Naive thymus-derived CD4-positive, alpha-beta T cell (primary cell): ENCODE measurements at regions of chr17 and their contacts with region 1.

Region 1: GRCh38 chr17:49763735-49764558 is at the start of gene FAM117A:
- DNase-seq: peak; percentile 72 to 99 (median 98)
- ATAC-seq: peak; percentile 93
- H3K4me3 ChIP-seq: peak within 1 kb of the TSS; percentile 82
- H3K4me3 Mint-ChIP-seq: peak within 1 kb of the TSS; percentile 92 to 99 (median 96)
- H3K27ac ChIP-seq: peak within 1 kb of the TSS; percentile 65
- H3K27ac Mint-ChIP-seq: peak within 1 kb of the TSS; percentile 62 to 96 (median 93)
- H3K4me1 ChIP-seq: peaks cover 32 to 36% of the 10 kb centered on the region in 2 donors
- H3K4me1 Mint-ChIP-seq: peaks cover 35 to 52% (median 51%) of the 10 kb centered on the region in 7 donors
- H3K27me3 ChIP-seq: no peaks in the 10 kb centered on the region
- H3K27me3 Mint-ChIP-seq: peaks cover 0 to 35% (median 0%) of the 10 kb centered on the region in 5 donors
- total RNA-seq, gene FAM117A: 31.8 to 99.1 (median 58.5) TPM

Region 2: GRCh38 chr17:49588726-49589576 is 175.0 kb before region 1 on chr17:
- CTCF ChIA-PET with region 1: no interaction called
- POLR2A ChIA-PET with region 1: no interaction called
- intact Hi-C with region 1: no loop called
- DNase-seq: no peak
- ATAC-seq: no peak
- H3K4me3 ChIP-seq: no peak overlapping the region
- H3K4me3 Mint-ChIP-seq: no peak overlapping the region
- H3K27ac ChIP-seq: no peak overlapping the region
- H3K27ac Mint-ChIP-seq: peak overlapping the region in 3 of 9 donors; percentile 52 to 81 (median 53)
- H3K4me1 ChIP-seq: no peaks in the 10 kb centered on the region
- H3K4me1 Mint-ChIP-seq: peaks cover 0 to 10% (median 0%) of the 10 kb centered on the region in 7 donors
- H3K27me3 ChIP-seq: no peaks in the 10 kb centered on the region
- H3K27me3 Mint-ChIP-seq: no peaks in the 10 kb centered on the region

Region 3: GRCh38 chr17:49739641-49740271 is 24.2 kb before region 1 on chr17:
- CTCF ChIA-PET with region 1: interaction called, 16 read pairs
- POLR2A ChIA-PET with region 1: interaction called, 318 read pairs
- intact Hi-C with region 1: loop called (anchors 1 kb)
- DNase-seq: peak; percentile 69 to 99 (median 98)
- ATAC-seq: peak; percentile 99
- H3K4me3 ChIP-seq: peak overlapping the region; percentile 67
- H3K4me3 Mint-ChIP-seq: peak overlapping the region; percentile 80 to 95 (median 90)
- H3K27ac ChIP-seq: peak overlapping the region; percentile 96
- H3K27ac Mint-ChIP-seq: peak overlapping the region; percentile 97 to 100 (median 99)
- H3K4me1 ChIP-seq: peaks cover 77 to 83% of the 10 kb centered on the region in 2 donors
- H3K4me1 Mint-ChIP-seq: peaks cover 62 to 97% (median 79%) of the 10 kb centered on the region in 7 donors
- H3K27me3 ChIP-seq: no peaks in the 10 kb centered on the region
- H3K27me3 Mint-ChIP-seq: no peaks in the 10 kb centered on the region

Region 4: DNA sequence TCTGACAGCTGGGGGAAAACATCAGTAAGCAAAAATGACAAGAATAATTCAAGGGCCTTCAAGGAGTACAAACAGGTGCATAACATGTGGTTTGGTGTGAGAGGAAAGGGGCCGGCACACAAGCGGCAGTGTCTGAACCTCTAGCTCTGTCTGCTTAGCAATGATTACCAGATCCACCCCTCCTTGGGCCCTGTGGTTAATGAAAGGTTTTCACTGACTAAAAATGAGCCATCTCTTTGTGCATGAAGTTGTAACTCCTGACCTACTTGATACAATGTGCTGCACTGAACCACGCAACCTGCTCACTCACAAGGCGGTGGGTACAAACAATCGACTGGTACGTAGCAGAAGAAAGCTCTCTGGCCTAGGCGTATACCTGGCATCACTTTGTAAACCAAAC is 15.2 kb before region 1 on chr17:
- CTCF ChIA-PET with region 1: interaction called, 16 read pairs
- POLR2A ChIA-PET with region 1: interaction called, 318 read pairs
- intact Hi-C with region 1: loop called (anchors 1 kb)
- DNase-seq: peak in 6 of 9 donors; percentile 43 to 61 (median 48)
- ATAC-seq: peak; percentile 79
- H3K4me3 ChIP-seq: no peak overlapping the region
- H3K4me3 Mint-ChIP-seq: peak overlapping the region; percentile 60 to 87 (median 76)
- H3K27ac ChIP-seq: peak overlapping the region; percentile 84
- H3K27ac Mint-ChIP-seq: peak overlapping the region; percentile 88 to 98 (median 97)
- H3K4me1 ChIP-seq: peaks cover 70 to 76% of the 10 kb centered on the region in 2 donors
- H3K4me1 Mint-ChIP-seq: peaks cover 49 to 92% (median 76%) of the 10 kb centered on the region in 7 donors
- H3K27me3 ChIP-seq: no peaks in the 10 kb centered on the region
- H3K27me3 Mint-ChIP-seq: no peaks in the 10 kb centered on the region

Region 5: DNA sequence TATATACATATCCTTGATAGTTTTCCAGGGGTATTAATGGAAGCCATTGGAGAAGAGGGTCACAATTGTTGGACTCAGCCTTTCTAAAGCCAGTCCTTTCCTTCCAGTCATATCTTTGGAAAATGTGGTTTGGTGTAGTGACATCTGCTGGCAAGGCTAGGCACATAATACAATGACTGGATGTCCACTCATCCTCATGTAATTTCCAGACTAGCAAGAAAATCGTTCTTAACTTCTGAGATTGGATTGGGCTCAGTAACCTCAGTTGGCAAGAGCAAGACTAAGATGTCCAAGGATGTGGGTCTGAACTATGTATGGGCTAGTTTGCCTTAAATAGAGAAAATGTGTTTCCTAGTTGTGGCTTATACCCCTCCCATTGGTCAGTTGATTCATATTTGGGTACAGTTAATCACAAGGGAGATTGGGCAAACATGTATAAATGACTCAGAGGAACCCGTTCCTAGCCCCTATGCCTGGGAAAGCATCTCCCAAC is 15.8 kb after region 1 on chr17:
- CTCF ChIA-PET with region 1: interaction called, 4 read pairs
- POLR2A ChIA-PET with region 1: interaction called, 70 read pairs
- intact Hi-C with region 1: loop called in 1 of 2 experiments (anchors 2 kb)
- DNase-seq: peak in 4 of 9 donors; percentile 14 to 33 (median 24)
- ATAC-seq: peak; percentile 62
- H3K4me3 ChIP-seq: no peak overlapping the region
- H3K4me3 Mint-ChIP-seq: no peak overlapping the region
- H3K27ac ChIP-seq: no peak overlapping the region
- H3K27ac Mint-ChIP-seq: no peak overlapping the region
- H3K4me1 ChIP-seq: no peaks in the 10 kb centered on the region
- H3K4me1 Mint-ChIP-seq: peaks cover 0 to 11% (median 5%) of the 10 kb centered on the region in 7 donors
- H3K27me3 ChIP-seq: no peaks in the 10 kb centered on the region
- H3K27me3 Mint-ChIP-seq: peaks cover 0 to 7% (median 0%) of the 10 kb centered on the region in 5 donors

Region 6: GRCh38 chr17:50001140-50001714 is 237.3 kb after region 1 on chr17:
- CTCF ChIA-PET with region 1: no interaction called
- POLR2A ChIA-PET with region 1: no interaction called
- intact Hi-C with region 1: no loop called
- DNase-seq: no peak
- ATAC-seq: no peak
- H3K4me3 ChIP-seq: no peak overlapping the region
- H3K4me3 Mint-ChIP-seq: no peak overlapping the region
- H3K27ac ChIP-seq: no peak overlapping the region
- H3K27ac Mint-ChIP-seq: no peak overlapping the region
- H3K4me1 ChIP-seq: peaks cover 3 to 10% of the 10 kb centered on the region in 2 donors
- H3K4me1 Mint-ChIP-seq: peaks cover 0 to 15% (median 8%) of the 10 kb centered on the region in 7 donors
- H3K27me3 ChIP-seq: peaks cover 3 to 9% of the 10 kb centered on the region in 2 donors
- H3K27me3 Mint-ChIP-seq: peaks cover 52 to 64% (median 58%) of the 10 kb centered on the region in 5 donors